ENCODE measurements at regions of chr4 and their contacts with region 1.

Region 1: GRCh38 chr4:145557720-145558119 is 61.5 kb upstream of the MMAA start:
- DNase-seq: peak; percentile 62
- H3K4me3 Mint-ChIP-seq: no peak overlapping the region
- H3K27ac Mint-ChIP-seq: no peak overlapping the region
- H3K4me1 Mint-ChIP-seq: no peaks in the 10 kb centered on the region
- H3K27me3 Mint-ChIP-seq: no peaks in the 10 kb centered on the region
- CTCF ChIP-seq: peak; percentile 70

Region 2: DNA sequence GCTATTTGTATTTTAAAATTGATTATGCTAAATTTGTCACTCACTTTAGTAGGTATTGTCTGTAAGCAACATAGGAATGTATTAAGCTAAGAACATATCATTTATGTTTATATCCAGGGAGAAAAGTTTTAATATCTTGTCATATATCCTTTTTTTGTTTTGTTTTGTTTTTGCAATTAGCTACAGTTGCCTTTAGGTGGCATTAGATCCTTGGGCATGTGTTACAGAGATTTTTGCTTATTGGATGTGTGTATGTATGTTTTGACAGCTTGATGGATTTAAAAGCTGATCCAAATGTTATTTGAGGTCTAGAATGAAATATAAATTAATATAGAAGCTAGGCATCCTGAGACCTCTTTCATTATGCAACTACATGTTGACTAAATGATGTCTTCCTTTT is 341.2 kb before region 1 on chr4:
- CTCF ChIA-PET with region 1: interaction called, 3 read pairs
- intact Hi-C with region 1: loop called (anchors 5 kb)
- DNase-seq: no peak
- H3K4me3 Mint-ChIP-seq: no peak overlapping the region
- H3K27ac Mint-ChIP-seq: no peak overlapping the region
- H3K4me1 Mint-ChIP-seq: no peaks in the 10 kb centered on the region
- H3K27me3 Mint-ChIP-seq: no peaks in the 10 kb centered on the region
- CTCF ChIP-seq: peak; percentile 32

Region 3: GRCh38 chr4:145234091-145234706 is 323.5 kb before region 1 on chr4:
- CTCF ChIA-PET with region 1: interaction called, 9 read pairs
- intact Hi-C with region 1: loop called (anchors 1 kb)
- DNase-seq: peak; percentile 69
- H3K4me3 Mint-ChIP-seq: no peak overlapping the region
- H3K27ac Mint-ChIP-seq: no peak overlapping the region
- H3K4me1 Mint-ChIP-seq: no peaks in the 10 kb centered on the region
- H3K27me3 Mint-ChIP-seq: no peaks in the 10 kb centered on the region
- CTCF ChIP-seq: peak; percentile 47

Region 4: DNA sequence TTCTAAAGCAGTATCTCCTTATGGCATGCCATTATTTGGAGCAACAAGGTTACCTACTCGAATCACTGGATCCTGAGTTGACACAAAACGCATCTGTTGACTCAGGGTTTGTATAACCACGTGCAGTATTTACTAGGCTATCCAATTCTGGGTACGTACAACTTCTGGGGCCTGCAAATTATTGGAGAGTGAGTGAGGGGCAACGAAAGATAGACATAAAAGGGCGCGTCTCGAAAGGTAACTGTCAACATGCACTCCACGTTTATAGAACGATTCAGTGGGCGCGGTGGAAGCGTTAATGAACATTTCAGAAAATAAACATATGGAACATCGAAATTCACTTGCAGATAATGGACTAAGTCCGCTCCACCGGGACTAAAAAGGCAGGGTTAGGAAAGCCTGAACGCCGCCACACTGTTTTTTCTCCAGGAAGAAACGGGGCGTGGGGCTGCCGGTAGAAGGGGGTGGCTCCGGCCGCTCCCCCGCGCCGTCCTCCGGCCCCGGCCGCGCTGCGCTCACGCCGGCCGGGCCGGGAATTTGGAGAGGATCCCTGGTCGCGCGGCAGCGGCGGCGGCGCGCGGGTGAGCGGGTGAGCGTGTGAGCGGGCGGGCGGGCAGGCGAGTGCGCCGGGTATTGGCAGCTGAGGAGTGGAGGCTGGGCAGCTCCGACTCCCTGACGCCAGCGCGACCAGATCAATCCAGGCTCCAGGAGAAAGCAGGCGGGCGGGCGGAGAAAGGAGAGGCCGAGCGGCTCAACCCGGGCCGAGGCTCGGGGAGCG is 76.4 kb before region 1 on chr4 and contains the start of gene SMAD1:
- CTCF ChIA-PET with region 1: no interaction called
- intact Hi-C with region 1: loop called (anchors 5 kb)
- DNase-seq: peak; percentile 72
- H3K4me3 Mint-ChIP-seq: no peak within 1 kb of the TSS
- H3K27ac Mint-ChIP-seq: no peak within 1 kb of the TSS
- H3K4me1 Mint-ChIP-seq: peaks cover 19% of the 10 kb centered on the region
- H3K27me3 Mint-ChIP-seq: no peaks in the 10 kb centered on the region
- CTCF ChIP-seq: no peak
- total RNA-seq, gene SMAD1: 15.3 and 19.3 TPM in 2 replicates

Region 5: GRCh38 chr4:145609481-145610427 is 52.0 kb after region 1 on chr4:
- CTCF ChIA-PET with region 1: no interaction called
- intact Hi-C with region 1: loop called (anchors 5 kb)
- DNase-seq: peak; percentile 63
- H3K4me3 Mint-ChIP-seq: no peak overlapping the region
- H3K27ac Mint-ChIP-seq: no peak overlapping the region
- H3K4me1 Mint-ChIP-seq: peaks cover 21% of the 10 kb centered on the region
- H3K27me3 Mint-ChIP-seq: no peaks in the 10 kb centered on the region
- CTCF ChIP-seq: peak; percentile 39

Region 6: DNA sequence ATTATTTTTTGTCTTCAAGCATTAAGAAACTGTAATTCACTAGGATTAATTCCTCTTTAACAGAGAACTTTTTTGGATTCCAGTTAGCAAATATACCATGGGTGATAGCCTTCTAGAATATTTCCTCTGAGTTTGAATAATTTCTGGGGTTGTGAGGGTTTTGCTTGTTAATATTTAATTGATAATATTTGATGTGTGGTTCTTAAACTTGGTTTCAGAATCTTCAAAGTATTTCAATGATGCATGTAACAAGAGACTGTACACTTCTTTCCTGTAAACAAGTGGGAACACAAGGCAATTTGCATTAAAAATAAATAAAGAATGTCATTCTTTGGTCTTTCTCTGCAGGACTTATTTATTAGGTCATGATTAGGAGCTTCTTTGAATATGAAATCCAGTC is 112.7 kb after region 1 on chr4:
- CTCF ChIA-PET with region 1: no interaction called
- intact Hi-C with region 1: no loop called
- DNase-seq: no peak
- H3K4me3 Mint-ChIP-seq: no peak overlapping the region
- H3K27ac Mint-ChIP-seq: no peak overlapping the region
- H3K4me1 Mint-ChIP-seq: no peaks in the 10 kb centered on the region
- H3K27me3 Mint-ChIP-seq: no peaks in the 10 kb centered on the region
- CTCF ChIP-seq: no peak

Region 7: GRCh38 chr4:145804116-145804515 is 246.4 kb after region 1 on chr4:
- CTCF ChIA-PET with region 1: no interaction called
- intact Hi-C with region 1: no loop called
- DNase-seq: no peak
- H3K4me3 Mint-ChIP-seq: no peak overlapping the region
- H3K27ac Mint-ChIP-seq: no peak overlapping the region
- H3K4me1 Mint-ChIP-seq: peaks cover 42% of the 10 kb centered on the region
- H3K27me3 Mint-ChIP-seq: no peaks in the 10 kb centered on the region
- CTCF ChIP-seq: no peak